ENCODE measurements at regions of chr11 and their contacts with region 1.

Region 1: DNA sequence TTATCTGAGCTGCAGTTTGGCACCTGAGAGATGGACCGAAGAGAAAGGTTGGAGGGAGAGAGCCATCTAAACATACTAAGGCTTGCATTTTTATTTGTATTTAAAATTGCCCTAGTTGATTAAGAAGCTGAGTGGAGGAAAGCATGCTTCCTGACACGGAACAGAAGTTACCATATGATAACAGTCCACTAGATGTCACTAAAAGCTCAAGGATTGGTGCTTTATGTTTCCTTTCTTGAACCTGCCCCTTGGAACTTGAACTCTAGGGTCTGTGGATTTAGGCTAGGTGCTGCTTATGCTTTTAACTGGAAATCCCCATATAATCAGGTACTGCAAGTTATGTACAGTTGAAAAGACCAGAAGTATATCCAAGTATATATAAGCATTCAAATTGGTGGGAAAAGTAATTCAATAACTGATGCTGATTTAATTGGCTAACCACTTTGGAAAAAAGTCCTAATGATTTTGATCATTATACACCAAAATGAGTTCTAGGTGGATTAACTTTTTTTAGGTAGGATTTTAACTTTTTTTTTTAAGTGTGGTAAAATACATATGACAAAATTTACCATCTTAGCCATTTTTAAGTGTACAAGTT is 9.5 kb downstream of the RBMXL2 start:
- DNase-seq: no peak
- H3K4me3 ChIP-seq: no peak overlapping the region
- H3K27ac ChIP-seq: no peak overlapping the region
- H3K27me3 ChIP-seq: peaks cover 0 to 2% (median 0%) of the 10 kb centered on the region in 45 donors
- CTCF ChIP-seq: peak; percentile 17 to 92 (median 72)

Region 2: GRCh38 chr11:7436657-7437056 is 338.3 kb after region 1 on chr11:
- intact Hi-C with region 1: loop called in 1 of 2 experiments (anchors 5 kb)
- DNase-seq: no peak
- H3K4me3 ChIP-seq: no peak overlapping the region
- H3K27ac ChIP-seq: no peak overlapping the region
- H3K27me3 ChIP-seq: no peaks in the 10 kb centered on the region
- CTCF ChIP-seq: no peak

Region 3: DNA sequence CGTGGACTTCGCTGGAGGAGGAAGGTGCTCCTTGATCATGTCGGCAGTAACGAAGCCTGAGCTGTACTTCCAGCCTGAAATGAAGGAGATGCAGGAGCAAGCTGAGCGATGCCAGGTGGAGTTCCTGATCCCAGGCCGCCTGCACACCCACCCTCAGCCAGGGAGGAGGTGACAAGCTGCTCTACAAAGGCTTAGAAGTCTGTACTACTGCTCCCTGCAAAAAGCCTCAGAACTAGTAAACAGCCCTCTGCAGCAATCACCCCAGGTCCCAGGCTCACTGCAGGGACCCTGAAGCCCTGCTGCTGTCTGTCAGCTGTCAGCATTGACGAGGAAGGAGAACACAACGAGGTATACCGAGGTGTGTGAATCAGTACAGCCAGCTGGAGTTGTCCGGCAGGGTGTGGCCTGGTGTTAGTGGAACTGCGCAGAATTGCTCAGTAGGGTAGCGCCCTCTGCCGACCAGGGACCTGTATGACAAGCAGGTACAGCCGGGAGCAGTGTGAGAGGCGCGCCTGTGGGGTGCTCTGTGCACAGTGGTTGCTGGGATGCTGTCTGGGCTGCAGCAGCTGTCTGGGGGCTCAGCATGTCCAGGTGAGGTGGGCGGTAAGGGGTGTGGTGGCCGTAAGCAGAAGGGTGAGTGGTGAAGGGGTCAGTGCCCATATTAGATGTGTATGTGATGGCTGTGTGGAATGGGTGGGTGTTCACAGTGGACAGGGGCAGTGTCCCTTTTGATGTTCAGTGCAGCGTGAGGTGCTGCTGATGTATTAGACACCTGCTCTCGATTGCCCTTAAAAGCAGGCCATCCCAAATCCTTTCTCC is 567.3 kb after region 1 on chr11:
- intact Hi-C with region 1: loop called in 1 of 2 experiments (anchors 5 kb)
- DNase-seq: peak in 9 of 10 donors; percentile 58 to 78 (median 68)
- H3K4me3 ChIP-seq: no peak overlapping the region
- H3K27ac ChIP-seq: peak overlapping the region in 49 of 59 donors; percentile 6 to 99 (median 94)
- H3K27me3 ChIP-seq: no peaks in the 10 kb centered on the region
- CTCF ChIP-seq: peak in 55 of 56 donors; percentile 26 to 93 (median 78)

Region 4: GRCh38 chr11:7696424-7696823 is 598.1 kb after region 1 on chr11:
- intact Hi-C with region 1: loop called in 1 of 2 experiments (anchors 5 kb)
- DNase-seq: no peak
- H3K4me3 ChIP-seq: no peak overlapping the region
- H3K27ac ChIP-seq: peak overlapping the region in 6 of 59 donors; percentile 6 to 79 (median 59)
- H3K27me3 ChIP-seq: peaks cover 0 to 6% (median 0%) of the 10 kb centered on the region in 45 donors
- CTCF ChIP-seq: no peak

Region 5: GRCh38 chr11:7986768-7987559 is 888.6 kb after region 1 on chr11 and contains the start of gene EIF3F:
- intact Hi-C with region 1: loop called in 1 of 2 experiments (anchors 5 kb)
- DNase-seq: peak; percentile 75 to 96 (median 91)
- H3K4me3 ChIP-seq: peak within 1 kb of the TSS; percentile 57 to 97 (median 83)
- H3K27ac ChIP-seq: peak within 1 kb of the TSS in 55 of 59 donors; percentile 9 to 89 (median 74)
- H3K27me3 ChIP-seq: no peaks in the 10 kb centered on the region
- CTCF ChIP-seq: peak; percentile 75 to 96 (median 90)
- total RNA-seq, gene EIF3F: 85.3 to 147 (median 108) TPM

Measured in dorsolateral prefrontal cortex (tissue), 120 donors.